Heart right ventricle (tissue), 16 donors: ENCODE measurements at regions of chr12 and their contacts with region 1.

Region 1: DNA sequence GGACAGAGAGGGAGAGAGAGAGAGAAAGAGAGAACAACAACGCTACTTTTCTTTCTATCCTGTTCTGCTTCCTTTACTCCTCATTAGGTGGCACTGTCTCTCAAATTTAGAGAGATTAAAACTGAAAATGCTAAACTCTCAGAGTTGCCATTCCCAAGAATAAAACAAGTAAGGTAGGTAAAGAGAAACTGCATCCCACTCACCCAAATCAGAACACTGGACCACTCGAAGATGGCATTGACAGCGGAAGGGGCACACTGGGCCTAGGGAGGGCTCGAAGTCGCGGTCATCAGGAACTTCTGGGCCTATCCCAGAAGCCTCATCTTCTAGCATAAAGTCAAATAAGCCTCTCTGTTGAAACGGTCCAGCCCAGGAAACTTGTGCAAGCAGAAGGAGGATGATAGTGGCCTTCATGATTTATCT is 4.5 kb downstream of the DCN start:
- DNase-seq: no peak
- ATAC-seq: peak in 7 of 8 donors; percentile 40 to 71 (median 66)
- H3K4me3 ChIP-seq: peak overlapping the region in 9 of 10 donors; percentile 29 to 52 (median 45)
- H3K27ac ChIP-seq: peak overlapping the region; percentile 30 to 84 (median 76)
- H3K4me1 ChIP-seq: peaks cover 0 to 7% (median 0%) of the 10 kb centered on the region in 9 donors
- H3K27me3 ChIP-seq: no peaks in the 10 kb centered on the region
- CTCF ChIP-seq: peak in 8 of 9 donors; percentile 14 to 65 (median 46)

Region 2: GRCh38 chr12:91250273-91250665 is 72.1 kb after region 1 on chr12:
- intact Hi-C with region 1: loop called in 1 of 10 experiments (anchors 10 kb)
- DNase-seq: no peak
- ATAC-seq: peak; percentile 53 to 93 (median 84)
- H3K4me3 ChIP-seq: no peak overlapping the region
- H3K27ac ChIP-seq: peak overlapping the region; percentile 16 to 77 (median 68)
- H3K4me1 ChIP-seq: peaks cover 0 to 10% (median 0%) of the 10 kb centered on the region in 9 donors
- H3K27me3 ChIP-seq: no peaks in the 10 kb centered on the region
- CTCF ChIP-seq: no peak

Region 3: GRCh38 chr12:91274916-91275315 is 96.8 kb after region 1 on chr12:
- intact Hi-C with region 1: loop called in 2 of 10 experiments (anchors 5 kb)
- DNase-seq: peak in 1 of 2 donors; percentile 41
- ATAC-seq: peak in 4 of 8 donors; percentile 43 to 58 (median 46)
- H3K4me3 ChIP-seq: no peak overlapping the region
- H3K27ac ChIP-seq: peak overlapping the region; percentile 25 to 85 (median 66)
- H3K4me1 ChIP-seq: peaks cover 0 to 42% (median 14%) of the 10 kb centered on the region in 9 donors
- H3K27me3 ChIP-seq: no peaks in the 10 kb centered on the region
- CTCF ChIP-seq: no peak

Region 4: GRCh38 chr12:91326058-91327027 is 148.2 kb after region 1 on chr12:
- intact Hi-C with region 1: loop called in 8 of 10 experiments (anchors 1 to 10 kb)
- DNase-seq: peak in 1 of 2 donors; percentile 67
- ATAC-seq: peak in 5 of 8 donors; percentile 42 to 75 (median 69)
- H3K4me3 ChIP-seq: peak overlapping the region in 2 of 10 donors; percentile 14 to 18
- H3K27ac ChIP-seq: peak overlapping the region in 9 of 10 donors; percentile 4 to 73 (median 63)
- H3K4me1 ChIP-seq: peaks cover 0 to 6% (median 0%) of the 10 kb centered on the region in 9 donors
- H3K27me3 ChIP-seq: no peaks in the 10 kb centered on the region
- CTCF ChIP-seq: peak; percentile 61 to 86 (median 78)

Region 5: DNA sequence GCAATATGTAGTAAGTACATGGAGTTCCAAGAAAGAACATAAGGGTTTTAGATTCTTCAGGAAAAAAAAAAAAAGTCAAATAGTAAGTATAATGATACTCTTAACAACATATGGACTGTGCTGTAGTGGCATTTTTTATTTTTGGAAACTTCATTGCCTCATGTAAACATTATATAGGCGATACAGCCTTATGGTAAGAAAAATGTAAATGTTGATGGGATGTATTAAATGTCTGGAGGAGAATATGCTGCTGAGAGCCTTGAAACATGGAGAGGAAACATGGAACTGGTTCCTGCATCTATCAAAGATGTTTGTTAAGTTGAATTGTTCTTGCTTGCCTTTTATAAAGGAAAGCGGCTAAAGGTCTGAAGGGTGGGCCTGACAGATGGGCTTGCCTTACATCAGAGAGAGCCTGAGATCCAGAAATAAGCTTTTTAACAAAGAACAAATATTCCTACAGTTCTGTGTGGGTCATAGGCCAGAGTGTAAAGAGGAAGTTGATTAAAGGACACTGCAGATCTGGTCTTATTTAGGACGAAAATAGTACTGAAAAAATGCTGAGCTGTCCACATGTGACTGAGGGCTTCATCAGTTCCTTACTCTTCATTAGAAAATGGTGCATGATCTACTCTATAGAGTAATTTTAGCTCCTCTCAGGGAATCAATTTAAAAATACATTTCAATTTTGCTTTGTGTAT is 452.6 kb after region 1 on chr12:
- intact Hi-C with region 1: no loop called
- DNase-seq: no peak
- ATAC-seq: peak in 4 of 8 donors; percentile 35 to 71 (median 50)
- H3K4me3 ChIP-seq: no peak overlapping the region
- H3K27ac ChIP-seq: no peak overlapping the region
- H3K4me1 ChIP-seq: peaks cover 0 to 5% (median 0%) of the 10 kb centered on the region in 9 donors
- H3K27me3 ChIP-seq: no peaks in the 10 kb centered on the region
- CTCF ChIP-seq: no peak